Activated B cell treated with CpG ODN at 0.5 μM for 24 hours (primary cell): ENCODE measurements at regions of chr1 and their contacts with region 1.

Region 1: DNA sequence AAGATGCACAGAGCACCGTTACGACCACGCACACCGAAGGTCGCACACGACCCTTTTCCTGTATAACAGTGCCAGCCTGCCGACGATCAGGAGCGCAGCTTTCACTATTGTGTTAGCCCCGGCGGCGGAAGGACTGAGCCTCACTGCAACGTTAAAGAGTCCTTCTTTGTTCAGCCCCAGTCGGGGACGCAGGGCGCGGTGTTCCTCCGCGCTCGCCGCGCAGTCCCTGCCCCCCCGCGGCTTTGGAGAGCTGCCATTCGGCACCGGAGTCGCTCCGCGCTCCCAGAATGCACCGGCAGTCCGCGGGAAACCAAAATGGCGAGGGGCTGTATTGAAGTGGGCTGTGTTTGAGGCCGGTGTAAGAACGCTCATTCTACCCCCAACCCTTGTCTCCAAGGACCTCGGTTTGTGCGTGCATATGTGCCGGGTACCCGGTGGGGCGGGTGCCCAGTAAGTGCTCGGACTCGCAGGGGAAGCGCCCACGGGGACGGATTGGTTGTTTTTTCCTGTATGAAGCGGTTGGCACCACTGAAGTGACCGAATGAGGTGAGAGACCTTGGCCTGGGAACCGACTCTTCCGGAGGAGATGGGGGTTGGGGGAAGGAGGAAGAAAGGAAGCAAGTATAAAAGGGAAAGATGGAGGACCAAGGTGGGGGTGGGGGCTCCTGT is at the start of gene MTF2:
- DNase-seq: peak; percentile 89
- ATAC-seq: peak; percentile 90
- H3K4me3 Mint-ChIP-seq: peak within 1 kb of the TSS; percentile 96
- H3K27ac Mint-ChIP-seq: peak within 1 kb of the TSS; percentile 97
- H3K4me1 Mint-ChIP-seq: peaks cover 54% of the 10 kb centered on the region
- H3K27me3 Mint-ChIP-seq: no peaks in the 10 kb centered on the region
- CTCF ChIP-seq: no peak
- total RNA-seq, gene MTF2: 49.1 and 59.7 TPM in 2 replicates

Region 2: GRCh38 chr1:92858564-92859399 is 220.3 kb before region 1 on chr1:
- CTCF ChIA-PET with region 1: interaction called, 3 read pairs
- POLR2A ChIA-PET with region 1: no interaction called
- intact Hi-C with region 1: loop called (anchors 5 kb)
- DNase-seq: no peak
- ATAC-seq: peak; percentile 97
- H3K4me3 Mint-ChIP-seq: no peak overlapping the region
- H3K27ac Mint-ChIP-seq: no peak overlapping the region
- H3K4me1 Mint-ChIP-seq: peaks cover 14% of the 10 kb centered on the region
- H3K27me3 Mint-ChIP-seq: no peaks in the 10 kb centered on the region
- CTCF ChIP-seq: peak; percentile 100

Region 3: GRCh38 chr1:93033785-93034184 is 45.3 kb before region 1 on chr1:
- CTCF ChIA-PET with region 1: no interaction called
- POLR2A ChIA-PET with region 1: interaction called, 13 read pairs
- intact Hi-C with region 1: no loop called
- DNase-seq: no peak
- ATAC-seq: peak; percentile 85
- H3K4me3 Mint-ChIP-seq: no peak overlapping the region
- H3K27ac Mint-ChIP-seq: peak overlapping the region; percentile 37
- H3K4me1 Mint-ChIP-seq: peaks cover 30% of the 10 kb centered on the region
- H3K27me3 Mint-ChIP-seq: no peaks in the 10 kb centered on the region
- CTCF ChIP-seq: no peak

Region 4: GRCh38 chr1:93123201-93123783 is 44.2 kb after region 1 on chr1:
- CTCF ChIA-PET with region 1: interaction called, 3 read pairs
- POLR2A ChIA-PET with region 1: interaction called, 3 read pairs
- intact Hi-C with region 1: loop called (anchors 2 kb)
- DNase-seq: no peak
- ATAC-seq: no peak
- H3K4me3 Mint-ChIP-seq: no peak overlapping the region
- H3K27ac Mint-ChIP-seq: no peak overlapping the region
- H3K4me1 Mint-ChIP-seq: no peaks in the 10 kb centered on the region
- H3K27me3 Mint-ChIP-seq: no peaks in the 10 kb centered on the region
- CTCF ChIP-seq: no peak

Region 5: DNA sequence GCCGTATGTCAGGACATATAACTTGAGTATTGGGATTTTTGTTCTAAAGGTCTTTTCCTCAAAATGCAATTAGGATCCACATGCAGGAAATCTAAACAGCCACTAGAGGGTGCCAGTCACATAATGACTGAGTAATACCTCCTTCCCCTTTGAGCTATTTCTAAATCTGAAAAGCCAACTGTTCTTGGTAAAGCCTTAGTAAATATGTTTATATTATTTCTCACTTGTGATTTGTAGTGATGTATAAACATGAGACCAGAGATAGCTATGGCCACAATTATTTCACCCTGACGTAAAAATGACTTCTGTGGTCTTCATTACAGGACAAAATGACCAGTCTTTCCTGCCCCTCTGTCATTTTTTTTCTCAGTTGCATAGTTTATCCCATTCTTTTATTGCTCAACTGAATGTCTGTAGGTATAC is 225.6 kb after region 1 on chr1:
- CTCF ChIA-PET with region 1: interaction called, 14 read pairs
- POLR2A ChIA-PET with region 1: no interaction called
- intact Hi-C with region 1: loop called (anchors 1 kb)
- DNase-seq: no peak
- ATAC-seq: peak; percentile 71
- H3K4me3 Mint-ChIP-seq: no peak overlapping the region
- H3K27ac Mint-ChIP-seq: no peak overlapping the region
- H3K4me1 Mint-ChIP-seq: no peaks in the 10 kb centered on the region
- H3K27me3 Mint-ChIP-seq: no peaks in the 10 kb centered on the region
- CTCF ChIP-seq: peak; percentile 87